ENCODE measurements at regions of chr19 and their contacts with region 1.

Region 1: DNA sequence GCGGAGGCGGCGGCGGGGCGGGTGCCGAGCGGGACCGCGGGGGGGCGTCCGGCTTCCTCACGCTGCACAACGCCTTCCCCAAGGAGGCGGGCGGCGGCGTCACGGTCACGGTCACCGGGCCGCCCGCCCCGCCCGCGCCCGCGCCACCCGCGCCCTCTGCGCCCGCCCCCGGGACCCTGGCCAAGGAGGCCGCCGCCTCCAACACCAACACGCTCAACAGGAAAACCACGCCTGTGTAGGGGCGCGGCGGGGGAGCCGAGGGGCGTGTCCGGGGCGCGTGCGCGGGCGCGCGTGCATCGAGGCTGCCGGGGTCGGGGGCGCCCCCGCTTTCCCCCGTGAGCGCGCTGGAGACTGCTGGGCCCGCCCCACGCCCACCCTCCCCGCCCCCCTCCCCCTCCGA is 8.8 kb upstream of the CACNG6 start:
- DNase-seq: peak; percentile 94
- H3K4me3 Mint-ChIP-seq: no peak overlapping the region
- H3K27ac Mint-ChIP-seq: no peak overlapping the region
- H3K4me1 Mint-ChIP-seq: peaks cover 24% of the 10 kb centered on the region
- H3K27me3 Mint-ChIP-seq: no peaks in the 10 kb centered on the region
- CTCF ChIP-seq: no peak

Region 2: DNA sequence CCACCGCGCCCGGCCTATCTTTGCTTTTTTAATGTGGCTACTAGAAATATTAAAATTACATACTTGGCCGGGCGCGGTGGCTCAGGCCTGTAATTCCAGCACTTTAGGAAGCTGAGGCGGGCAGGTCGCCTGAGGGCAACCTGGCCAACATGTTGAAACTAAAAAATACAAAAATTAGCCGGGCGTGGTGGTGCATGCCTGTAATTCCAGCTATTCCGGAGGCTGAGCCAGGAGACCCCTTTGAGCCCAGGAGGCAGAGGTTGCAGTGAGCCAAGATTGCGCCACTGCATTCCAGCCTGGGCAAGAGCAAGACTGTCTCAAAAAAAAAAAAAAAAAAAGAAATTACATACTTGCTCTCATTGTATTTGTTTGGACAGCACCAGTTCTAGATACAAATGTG is 385.6 kb before region 1 on chr19:
- CTCF ChIA-PET with region 1: no interaction called
- intact Hi-C with region 1: no loop called
- DNase-seq: no peak
- H3K4me3 Mint-ChIP-seq: no peak overlapping the region
- H3K27ac Mint-ChIP-seq: no peak overlapping the region
- H3K4me1 Mint-ChIP-seq: no peaks in the 10 kb centered on the region
- H3K27me3 Mint-ChIP-seq: no peaks in the 10 kb centered on the region
- CTCF ChIP-seq: no peak

Region 3: GRCh38 chr19:53844849-53845246 is 137.8 kb before region 1 on chr19:
- CTCF ChIA-PET with region 1: no interaction called
- intact Hi-C with region 1: loop called (anchors 1 kb)
- DNase-seq: no peak
- H3K4me3 Mint-ChIP-seq: no peak overlapping the region
- H3K27ac Mint-ChIP-seq: no peak overlapping the region
- H3K4me1 Mint-ChIP-seq: peaks cover 15% of the 10 kb centered on the region
- H3K27me3 Mint-ChIP-seq: no peaks in the 10 kb centered on the region
- CTCF ChIP-seq: no peak

Region 4: DNA sequence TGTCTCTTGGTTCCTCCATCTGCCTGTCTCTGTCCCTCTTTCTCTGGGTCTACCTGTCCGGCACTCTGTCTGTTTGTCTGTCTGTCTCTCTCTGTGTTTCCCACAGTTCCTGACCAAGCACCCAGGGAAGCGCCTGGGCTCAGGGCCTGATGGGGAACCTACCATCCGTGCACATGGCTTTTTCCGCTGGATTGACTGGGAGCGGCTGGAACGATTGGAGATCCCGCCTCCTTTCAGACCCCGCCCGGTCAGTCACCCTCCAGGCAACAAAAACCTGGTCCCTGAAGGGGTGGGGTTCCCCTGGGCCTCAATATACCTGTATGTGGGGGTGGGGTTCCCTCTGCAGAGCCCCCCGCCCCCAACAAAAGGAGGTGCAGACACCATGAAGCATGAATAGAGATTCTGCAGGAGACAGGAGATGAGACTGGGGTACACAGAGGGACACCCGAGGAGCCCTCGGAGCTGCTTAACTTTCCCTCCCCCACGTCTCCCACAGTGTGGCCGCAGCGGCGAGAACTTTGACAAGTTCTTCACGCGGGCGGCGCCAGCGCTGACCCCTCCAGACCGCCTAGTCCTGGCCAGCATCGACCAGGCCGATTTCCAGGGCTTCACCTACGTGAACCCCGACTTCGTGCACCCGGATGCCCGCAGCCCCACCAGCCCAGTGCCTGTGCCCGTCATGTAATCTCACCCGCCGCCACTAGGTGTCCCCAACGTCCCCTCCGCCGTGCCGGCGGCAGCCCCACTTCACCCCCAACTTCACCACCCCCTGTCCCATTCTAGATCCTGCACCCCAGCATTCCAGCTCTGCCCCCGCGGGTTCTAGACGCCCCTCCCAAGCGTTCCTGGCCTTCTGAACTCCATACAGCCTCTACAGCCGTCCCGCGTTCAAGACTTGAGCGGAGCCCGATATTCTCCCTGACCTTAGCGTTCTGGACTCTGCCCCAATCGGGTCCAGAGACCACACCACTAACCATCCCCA is 76.1 kb before region 1 on chr19:
- CTCF ChIA-PET with region 1: interaction called, 15 read pairs
- intact Hi-C with region 1: loop called (anchors 5 kb)
- DNase-seq: peak; percentile 86
- H3K4me3 Mint-ChIP-seq: peak overlapping the region; percentile 14
- H3K27ac Mint-ChIP-seq: peak overlapping the region; percentile 29
- H3K4me1 Mint-ChIP-seq: peaks cover 57% of the 10 kb centered on the region
- H3K27me3 Mint-ChIP-seq: peaks cover 45% of the 10 kb centered on the region
- CTCF ChIP-seq: peak; percentile 97

Region 5: DNA sequence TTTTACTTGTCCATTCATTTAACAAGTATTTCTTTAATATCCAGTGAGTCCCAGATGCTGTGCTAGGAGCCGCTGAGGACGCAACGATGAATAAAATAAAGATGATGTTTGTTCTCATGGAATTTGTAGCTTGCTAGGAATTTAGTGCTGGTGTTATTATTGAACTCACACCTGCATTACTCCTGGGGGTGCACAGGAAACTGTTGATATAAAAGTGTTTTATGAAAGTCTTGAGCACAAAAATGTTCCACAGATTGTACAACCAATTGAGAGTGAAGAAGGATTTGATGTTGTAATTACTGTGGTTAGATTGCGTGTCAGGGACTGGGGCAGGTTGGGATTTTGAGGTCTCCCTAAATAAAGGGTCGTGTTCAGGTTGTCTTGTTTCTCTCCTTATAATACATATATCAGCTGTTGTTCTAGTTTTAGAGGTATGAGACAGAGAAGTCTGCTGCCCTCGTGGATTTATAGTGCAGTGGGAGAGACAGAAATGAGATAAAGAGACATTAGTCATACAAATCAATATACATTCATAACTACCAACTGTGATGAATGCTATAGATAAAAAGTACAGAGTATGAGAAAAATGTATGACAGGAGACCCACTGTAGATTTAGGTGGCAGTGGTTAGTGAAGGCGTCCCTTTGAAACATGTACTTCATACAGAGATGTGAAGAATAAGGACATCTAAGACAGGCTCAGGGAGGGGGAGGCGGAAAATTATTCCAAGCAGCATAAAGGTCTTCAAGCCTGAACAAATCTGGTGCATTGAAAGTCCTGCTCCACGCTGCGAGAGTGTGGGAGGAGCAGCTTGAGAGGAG is 20.1 kb after region 1 on chr19:
- CTCF ChIA-PET with region 1: no interaction called
- intact Hi-C with region 1: loop called (anchors 1 kb)
- DNase-seq: peak; percentile 73
- H3K4me3 Mint-ChIP-seq: peak overlapping the region; percentile 20
- H3K27ac Mint-ChIP-seq: peak overlapping the region; percentile 88
- H3K4me1 Mint-ChIP-seq: peaks cover 51% of the 10 kb centered on the region
- H3K27me3 Mint-ChIP-seq: no peaks in the 10 kb centered on the region
- CTCF ChIP-seq: no peak

Region 6: GRCh38 chr19:54029930-54030490 is 47.4 kb after region 1 on chr19:
- CTCF ChIA-PET with region 1: interaction called, 13 read pairs
- intact Hi-C with region 1: no loop called
- DNase-seq: peak; percentile 83
- H3K4me3 Mint-ChIP-seq: no peak overlapping the region
- H3K27ac Mint-ChIP-seq: no peak overlapping the region
- H3K4me1 Mint-ChIP-seq: peaks cover 21% of the 10 kb centered on the region
- H3K27me3 Mint-ChIP-seq: no peaks in the 10 kb centered on the region
- CTCF ChIP-seq: peak; percentile 83

Region 7: DNA sequence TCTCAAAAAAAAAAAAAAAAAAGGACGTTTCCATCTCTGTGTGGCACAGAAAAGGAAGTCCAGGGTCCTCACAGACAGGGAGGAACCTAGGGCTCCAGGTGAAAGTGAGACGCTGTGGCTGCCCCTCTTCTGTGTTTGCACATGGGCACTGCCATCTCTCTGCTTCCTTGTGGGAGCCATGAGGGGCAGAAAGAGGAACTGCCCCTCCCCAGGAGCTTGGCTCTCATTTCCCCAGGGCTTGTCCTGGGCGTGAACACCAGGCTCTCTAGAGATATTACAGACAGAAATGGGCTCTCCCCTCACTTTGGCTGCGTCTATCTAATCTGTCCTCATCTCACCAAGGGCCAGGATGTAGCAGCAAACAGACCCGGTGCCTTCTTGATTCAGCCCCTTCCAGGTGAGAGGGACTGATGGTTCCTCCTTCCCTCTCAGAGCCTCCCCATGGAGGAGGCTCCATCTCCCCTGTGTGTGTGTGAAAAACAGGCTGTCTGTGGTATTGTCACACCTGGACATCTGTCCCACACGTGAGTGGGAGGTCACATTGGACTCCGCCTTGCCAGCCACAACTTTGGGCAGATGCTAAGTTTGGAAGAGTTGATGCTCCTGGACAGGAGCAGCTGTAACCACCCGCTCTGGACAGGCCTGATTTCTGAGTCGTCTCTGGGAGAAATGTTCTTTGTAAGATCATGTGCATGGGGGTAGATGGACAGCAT is 357.2 kb after region 1 on chr19:
- CTCF ChIA-PET with region 1: no interaction called
- intact Hi-C with region 1: no loop called
- DNase-seq: no peak
- H3K4me3 Mint-ChIP-seq: no peak overlapping the region
- H3K27ac Mint-ChIP-seq: no peak overlapping the region
- H3K4me1 Mint-ChIP-seq: peaks cover 11% of the 10 kb centered on the region
- H3K27me3 Mint-ChIP-seq: peaks cover 43% of the 10 kb centered on the region
- CTCF ChIP-seq: no peak